ENCODE measurements at regions of chr2 and their contacts with region 1.

Region 1: DNA sequence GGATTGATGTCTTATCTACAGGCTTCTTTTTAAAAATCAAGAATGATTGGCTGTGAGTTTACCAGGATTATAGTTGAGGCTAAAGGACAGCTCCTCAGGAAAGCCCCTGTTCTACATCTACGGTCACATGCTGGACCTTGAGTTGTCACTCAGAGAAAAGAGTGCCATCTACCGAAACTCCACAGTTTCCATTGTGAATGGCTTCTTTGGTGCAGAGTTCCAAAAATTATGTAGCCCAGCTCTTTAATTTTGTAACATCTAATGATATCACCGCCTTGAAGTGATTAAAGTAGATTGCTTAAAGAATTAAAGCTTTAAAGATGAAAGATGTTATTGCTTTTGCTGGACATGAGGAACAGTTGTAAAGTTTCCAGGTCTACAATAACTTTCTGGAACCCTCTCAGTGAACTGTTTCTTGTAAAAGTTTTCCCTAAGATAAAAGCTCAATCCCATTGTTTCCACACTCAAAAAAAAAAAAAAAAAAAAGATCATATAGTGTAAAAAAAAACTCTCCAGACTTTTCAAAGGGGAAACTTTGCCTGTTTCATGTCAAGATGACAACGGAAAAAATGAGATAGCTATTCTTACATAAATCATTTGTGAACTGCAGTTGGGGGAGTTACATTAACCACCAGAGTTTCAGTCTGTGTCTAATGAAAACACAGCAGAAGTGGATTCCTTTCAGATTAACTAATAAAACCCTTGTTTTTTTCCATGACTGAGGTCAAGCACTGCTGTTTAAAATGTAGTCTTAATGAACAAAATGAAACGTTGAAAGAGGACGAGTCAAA is 4.3 kb downstream of the COL3A1 start:
- DNase-seq: no peak
- H3K4me3 ChIP-seq: peak overlapping the region; percentile 1 to 62 (median 54)
- H3K27ac ChIP-seq: peak overlapping the region; percentile 80 to 91 (median 86)
- H3K4me1 ChIP-seq: peaks cover 0 to 58% (median 24%) of the 10 kb centered on the region in 4 donors
- H3K27me3 ChIP-seq: no peaks in the 10 kb centered on the region
- CTCF ChIP-seq: no peak
- EP300 ChIP-seq: peak; percentile 1 to 87 (median 79)
- POLR2A ChIP-seq: no peak

Region 2: DNA sequence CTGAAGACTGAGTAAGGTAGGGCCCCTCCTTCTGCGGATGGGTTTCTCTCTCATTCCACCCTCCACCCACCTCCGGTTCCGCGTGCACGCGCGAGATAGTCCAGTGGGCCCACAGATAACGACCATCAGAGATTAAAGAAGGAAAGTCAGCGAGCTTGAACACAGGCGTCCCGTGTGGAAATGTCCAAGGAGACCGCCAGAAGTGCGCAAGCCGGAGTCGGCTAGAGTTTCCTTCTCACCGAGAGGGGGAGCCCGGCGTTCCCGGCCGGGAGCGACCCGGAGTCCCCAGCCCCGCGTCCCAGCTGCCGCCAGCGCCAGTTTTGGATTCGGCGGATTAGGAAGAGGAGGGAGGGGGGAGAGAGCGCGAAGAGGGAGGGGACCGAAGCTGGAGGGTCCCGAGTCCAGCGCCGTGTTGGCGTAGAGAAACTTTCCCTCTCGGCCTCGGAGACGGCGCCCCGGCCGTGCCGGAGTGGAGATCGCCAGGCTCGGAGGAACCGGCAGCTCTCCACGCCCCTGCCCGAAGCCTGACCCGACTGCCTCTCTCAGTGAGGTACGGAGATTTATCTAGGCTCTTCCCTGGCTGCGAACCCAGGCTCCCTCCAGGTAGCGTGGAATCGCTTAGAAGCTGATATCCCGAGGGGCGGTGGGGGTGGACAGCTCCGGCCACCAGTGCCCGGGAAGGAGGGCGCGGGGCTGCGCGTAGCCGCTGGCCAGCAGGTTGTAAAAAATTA is 686.7 kb before region 1 on chr2 and contains the start of gene GULP1:
- intact Hi-C with region 1: loop called (anchors 2 kb)
- DNase-seq: peak; percentile 90
- H3K4me3 ChIP-seq: peak within 1 kb of the TSS; percentile 77 to 90 (median 84)
- H3K27ac ChIP-seq: peak within 1 kb of the TSS; percentile 92 to 98 (median 95)
- H3K4me1 ChIP-seq: peaks cover 0 to 33% (median 26%) of the 10 kb centered on the region in 4 donors
- H3K27me3 ChIP-seq: no peaks in the 10 kb centered on the region
- CTCF ChIP-seq: peak; percentile 39 to 72 (median 57)
- EP300 ChIP-seq: no peak
- POLR2A ChIP-seq: no peak
- total RNA-seq, gene GULP1: 50.9 to 56.1 (median 53.5) TPM

Region 3: DNA sequence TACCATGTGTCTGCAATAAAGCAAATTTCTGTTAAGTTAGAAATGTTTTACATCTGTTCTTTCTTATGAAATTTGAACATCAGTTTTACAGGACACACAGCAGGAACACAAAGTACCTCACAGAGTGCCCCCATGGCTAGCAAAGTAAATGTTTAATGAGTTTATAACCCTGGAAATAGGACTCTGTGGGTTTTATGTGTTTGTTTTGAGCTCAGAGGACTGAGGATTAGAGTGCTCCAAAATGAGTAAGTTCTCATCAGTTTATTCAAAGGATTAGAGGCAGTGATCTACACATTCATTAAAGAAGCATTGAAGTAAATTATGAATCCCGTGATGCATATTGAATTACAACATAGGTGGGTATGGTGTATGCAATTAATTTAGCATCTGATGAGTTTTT is 405.0 kb before region 1 on chr2:
- intact Hi-C with region 1: loop called (anchors 5 kb)
- DNase-seq: no peak
- H3K4me3 ChIP-seq: no peak overlapping the region
- H3K27ac ChIP-seq: peak overlapping the region in 1 of 4 donors; percentile 25
- H3K4me1 ChIP-seq: peaks cover 0 to 30% (median 22%) of the 10 kb centered on the region in 4 donors
- H3K27me3 ChIP-seq: no peaks in the 10 kb centered on the region
- CTCF ChIP-seq: no peak
- EP300 ChIP-seq: no peak
- POLR2A ChIP-seq: no peak

Region 4: DNA sequence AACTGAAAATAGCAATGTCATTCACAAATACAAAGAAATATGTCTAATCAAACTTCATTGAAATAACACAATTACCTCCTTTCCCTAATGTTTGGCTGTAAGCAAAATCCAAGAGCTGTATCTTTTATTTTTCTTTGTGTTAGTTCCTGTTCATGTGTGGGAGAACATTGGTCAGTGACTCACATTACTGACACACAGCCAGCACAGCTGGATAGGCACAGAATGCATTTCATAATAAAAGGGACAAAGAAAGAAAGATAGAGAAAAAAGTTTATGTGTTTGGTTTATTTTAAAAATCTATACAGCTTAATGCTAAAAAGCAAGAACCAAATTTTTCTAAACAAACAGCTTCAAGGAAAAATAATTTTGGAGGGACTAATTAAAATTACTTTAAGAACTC is 189.9 kb before region 1 on chr2:
- intact Hi-C with region 1: loop called (anchors 1 kb)
- DNase-seq: peak; percentile 91
- H3K4me3 ChIP-seq: peak overlapping the region in 1 of 4 donors; percentile 18
- H3K27ac ChIP-seq: peak overlapping the region; percentile 76 to 87 (median 84)
- H3K4me1 ChIP-seq: peaks cover 0 to 50% (median 33%) of the 10 kb centered on the region in 4 donors
- H3K27me3 ChIP-seq: no peaks in the 10 kb centered on the region
- CTCF ChIP-seq: no peak
- EP300 ChIP-seq: no peak
- POLR2A ChIP-seq: no peak

Region 5: DNA sequence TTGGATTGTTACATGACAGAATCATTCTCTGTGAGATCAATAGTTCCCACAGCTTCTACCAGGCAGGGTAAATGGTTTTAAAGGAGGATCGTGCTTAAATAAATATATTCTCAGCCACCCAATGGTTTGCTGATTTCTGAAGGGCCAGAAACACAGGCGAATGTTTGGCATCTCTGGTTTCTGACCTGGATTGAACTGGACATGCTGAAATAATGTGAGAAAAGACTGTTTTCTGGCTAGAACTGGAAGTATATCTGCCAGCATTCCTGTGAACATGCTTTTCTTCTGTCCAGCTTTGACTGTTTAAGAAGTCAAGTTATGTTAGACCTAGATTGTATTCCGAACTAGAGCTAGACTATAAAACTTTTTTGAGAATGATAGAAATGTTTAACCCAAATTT is 81.4 kb before region 1 on chr2:
- intact Hi-C with region 1: loop called (anchors 5 kb)
- DNase-seq: no peak
- H3K4me3 ChIP-seq: no peak overlapping the region
- H3K27ac ChIP-seq: peak overlapping the region; percentile 43 to 64 (median 60)
- H3K4me1 ChIP-seq: peaks cover 0 to 43% (median 27%) of the 10 kb centered on the region in 4 donors
- H3K27me3 ChIP-seq: no peaks in the 10 kb centered on the region
- CTCF ChIP-seq: no peak
- EP300 ChIP-seq: no peak
- POLR2A ChIP-seq: no peak

Region 6: DNA sequence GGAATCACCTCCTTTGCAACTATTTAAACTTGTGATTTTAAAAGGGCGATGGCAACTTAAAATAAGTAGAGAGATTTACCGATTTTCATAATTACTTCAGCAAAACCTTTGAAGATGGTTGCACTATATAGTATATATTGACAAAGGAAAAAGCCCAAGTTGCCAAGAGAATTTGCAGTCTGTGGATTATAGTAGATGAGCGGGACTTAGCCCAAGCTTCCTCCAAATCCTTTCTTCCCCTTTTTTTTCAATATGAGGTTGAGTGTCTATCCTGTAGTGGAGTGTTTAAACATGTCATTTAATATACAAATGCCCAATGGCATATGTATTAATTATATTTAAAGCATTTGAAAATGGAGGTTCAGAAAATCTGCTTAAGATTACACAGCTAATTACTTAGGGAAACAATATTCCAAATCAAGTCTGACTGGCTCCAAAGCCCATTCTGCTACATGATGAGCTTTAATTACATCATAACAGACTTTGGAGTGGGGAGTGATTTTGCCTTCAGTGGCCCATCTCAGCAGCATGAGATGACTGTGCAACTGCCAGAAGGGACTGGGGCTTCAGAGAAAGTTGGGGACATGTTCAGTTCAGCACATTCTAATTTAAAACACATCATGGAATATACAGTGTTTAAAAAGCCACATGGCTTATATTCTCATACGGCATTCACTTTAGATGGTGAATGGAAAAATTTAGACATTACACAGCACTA is 68.8 kb after region 1 on chr2:
- intact Hi-C with region 1: no loop called
- DNase-seq: no peak
- H3K4me3 ChIP-seq: no peak overlapping the region
- H3K27ac ChIP-seq: no peak overlapping the region
- H3K4me1 ChIP-seq: no peaks in the 10 kb centered on the region
- H3K27me3 ChIP-seq: no peaks in the 10 kb centered on the region
- CTCF ChIP-seq: no peak
- EP300 ChIP-seq: no peak
- POLR2A ChIP-seq: no peak

Region 7: DNA sequence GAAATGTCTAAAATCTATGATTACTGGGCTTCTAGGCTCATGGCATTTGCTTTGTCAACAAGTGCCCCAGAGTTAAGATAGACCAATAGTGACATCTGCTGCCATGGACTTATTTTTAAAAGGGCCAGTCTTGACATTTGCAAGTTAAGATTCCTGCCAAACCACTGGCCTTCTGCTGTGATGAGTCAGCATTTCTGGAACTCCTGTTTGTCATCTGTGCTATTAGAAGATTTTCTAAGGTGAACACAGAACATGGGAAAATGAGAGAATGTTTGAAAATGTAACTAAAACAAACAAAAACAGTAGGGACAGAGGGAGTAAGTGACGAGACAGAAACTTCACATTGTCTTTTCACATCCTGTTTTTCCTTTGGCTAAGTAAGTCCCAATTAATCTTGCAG is 369.1 kb after region 1 on chr2:
- intact Hi-C with region 1: loop called (anchors 5 kb)
- DNase-seq: no peak
- H3K4me3 ChIP-seq: no peak overlapping the region
- H3K27ac ChIP-seq: peak overlapping the region; percentile 46 to 78 (median 70)
- H3K4me1 ChIP-seq: peaks cover 0 to 62% (median 49%) of the 10 kb centered on the region in 4 donors
- H3K27me3 ChIP-seq: no peaks in the 10 kb centered on the region
- CTCF ChIP-seq: no peak
- EP300 ChIP-seq: no peak
- POLR2A ChIP-seq: no peak

Measured in sigmoid colon (tissue), 7 donors.